Thyroid gland (tissue), 4 donors: ENCODE measurements at regions of chr16 and their contacts with region 1.

Region 1: DNA sequence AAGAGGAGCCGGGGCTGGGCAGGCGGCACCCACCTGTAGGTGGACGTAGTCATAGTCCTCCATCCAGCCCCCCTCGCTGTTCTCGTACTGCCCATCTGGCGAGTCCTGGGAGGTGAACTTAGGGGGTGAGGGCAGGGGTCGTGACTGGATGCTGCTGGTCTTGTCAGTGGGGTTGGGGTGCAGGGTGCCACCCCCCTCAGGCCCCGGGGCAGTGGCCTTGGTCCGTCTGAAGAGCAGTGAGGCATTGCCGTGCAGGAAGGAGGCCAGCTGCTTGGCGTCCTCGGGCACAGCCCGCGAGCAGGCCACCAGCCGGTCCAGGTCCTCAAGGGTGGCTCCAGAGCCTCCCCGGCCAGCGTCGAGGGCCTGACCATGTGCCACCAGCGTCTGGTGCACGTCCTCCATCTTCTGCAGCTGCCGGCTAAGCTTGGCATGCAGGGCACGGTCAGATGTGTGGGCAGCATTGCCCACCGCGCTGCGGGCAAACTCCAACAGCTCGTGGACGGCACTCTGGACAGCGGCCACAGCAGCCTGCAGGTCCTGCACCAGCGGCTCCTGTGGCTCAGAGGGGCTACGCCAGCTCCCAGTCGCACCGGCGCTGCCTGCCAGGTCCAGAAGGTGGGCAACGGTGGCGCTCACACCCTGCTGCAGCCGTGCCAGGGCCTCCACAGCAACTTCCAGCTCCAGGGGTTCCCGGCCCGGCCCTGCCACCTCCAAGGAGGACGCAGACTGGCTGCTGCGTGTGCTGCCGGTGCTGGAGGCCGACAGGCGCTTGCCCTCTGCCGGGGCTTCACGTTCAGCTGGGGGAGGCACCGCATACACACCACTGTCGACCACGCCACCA is 16.3 kb downstream of the CTRB1 start:
- DNase-seq: no peak
- H3K4me3 ChIP-seq: no peak overlapping the region
- H3K27ac ChIP-seq: peak overlapping the region in 2 of 3 donors; percentile 17 to 26
- H3K4me1 ChIP-seq: peaks cover 24 to 39% of the 10 kb centered on the region in 2 donors
- H3K27me3 ChIP-seq: no peaks in the 10 kb centered on the region
- CTCF ChIP-seq: no peak
- POLR2A ChIP-seq: no peak

Region 2: GRCh38 chr16:75198135-75198600 is 36.9 kb before region 1 on chr16:
- intact Hi-C with region 1: loop called (anchors 5 kb)
- DNase-seq: no peak
- H3K4me3 ChIP-seq: no peak overlapping the region
- H3K27ac ChIP-seq: no peak overlapping the region
- H3K4me1 ChIP-seq: no peaks in the 10 kb centered on the region
- H3K27me3 ChIP-seq: no peaks in the 10 kb centered on the region
- CTCF ChIP-seq: no peak
- POLR2A ChIP-seq: no peak

Region 3: GRCh38 chr16:75296606-75297005 is 61.5 kb after region 1 on chr16:
- intact Hi-C with region 1: no loop called
- DNase-seq: peak; percentile 67 to 72
- H3K4me3 ChIP-seq: no peak overlapping the region
- H3K27ac ChIP-seq: no peak overlapping the region
- H3K4me1 ChIP-seq: peaks cover 0 to 8% of the 10 kb centered on the region in 2 donors
- H3K27me3 ChIP-seq: no peaks in the 10 kb centered on the region
- CTCF ChIP-seq: no peak
- POLR2A ChIP-seq: no peak